ENCODE measurements at regions of chr11 and their contacts with region 1.

Region 1: DNA sequence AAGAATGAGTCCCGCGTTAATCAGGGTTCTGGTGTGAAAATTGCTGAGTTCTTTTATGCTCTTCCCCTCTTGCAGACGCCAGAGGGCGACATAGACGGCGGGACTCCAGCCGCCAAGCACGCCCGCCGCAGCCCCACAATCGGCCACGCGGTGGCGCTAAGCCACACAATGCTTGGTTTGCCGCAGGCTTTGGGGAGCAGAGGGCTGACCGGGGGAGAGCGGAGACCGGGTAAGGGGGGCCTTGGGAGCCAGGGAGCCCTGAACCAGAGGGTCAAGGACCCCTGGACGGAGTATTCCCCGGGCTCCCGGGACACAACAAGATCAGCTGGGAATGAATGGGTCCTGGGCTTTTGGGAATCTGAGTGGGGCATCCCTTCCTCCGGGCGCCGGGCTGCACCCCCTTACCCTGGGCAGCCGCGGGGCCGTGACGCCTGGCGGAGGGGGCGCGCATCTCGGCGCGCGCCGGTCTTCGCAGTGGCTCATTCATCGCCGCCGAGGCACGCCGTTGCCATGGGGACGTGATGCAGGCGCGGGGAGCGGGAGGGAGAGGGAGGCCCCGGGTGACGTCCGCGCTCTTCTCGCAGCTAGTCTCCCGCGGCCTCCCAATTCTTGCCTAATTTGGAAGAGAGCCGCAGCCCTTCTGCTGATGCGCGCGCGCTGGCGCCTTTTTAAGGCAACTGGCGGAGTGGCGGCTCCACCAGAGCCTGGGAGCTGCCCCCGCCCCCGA is 12.2 kb upstream of the NPAS4 start:
- DNase-seq: peak; percentile 36
- ATAC-seq: peak; percentile 93
- H3K4me3 ChIP-seq: no peak overlapping the region
- H3K27ac ChIP-seq: no peak overlapping the region
- H3K4me1 ChIP-seq: no peaks in the 10 kb centered on the region
- H3K27me3 ChIP-seq: peaks cover 0 to 8% of the 10 kb centered on the region in 2 experiments; a peak in 2 of 4 replicates
- CTCF ChIP-seq: peak; percentile 99 to 100 (median 99)
- EP300 ChIP-seq: no peak
- POLR2A ChIP-seq: no peak
- RAD21 ChIP-seq: peak; percentile 86

Region 2: DNA sequence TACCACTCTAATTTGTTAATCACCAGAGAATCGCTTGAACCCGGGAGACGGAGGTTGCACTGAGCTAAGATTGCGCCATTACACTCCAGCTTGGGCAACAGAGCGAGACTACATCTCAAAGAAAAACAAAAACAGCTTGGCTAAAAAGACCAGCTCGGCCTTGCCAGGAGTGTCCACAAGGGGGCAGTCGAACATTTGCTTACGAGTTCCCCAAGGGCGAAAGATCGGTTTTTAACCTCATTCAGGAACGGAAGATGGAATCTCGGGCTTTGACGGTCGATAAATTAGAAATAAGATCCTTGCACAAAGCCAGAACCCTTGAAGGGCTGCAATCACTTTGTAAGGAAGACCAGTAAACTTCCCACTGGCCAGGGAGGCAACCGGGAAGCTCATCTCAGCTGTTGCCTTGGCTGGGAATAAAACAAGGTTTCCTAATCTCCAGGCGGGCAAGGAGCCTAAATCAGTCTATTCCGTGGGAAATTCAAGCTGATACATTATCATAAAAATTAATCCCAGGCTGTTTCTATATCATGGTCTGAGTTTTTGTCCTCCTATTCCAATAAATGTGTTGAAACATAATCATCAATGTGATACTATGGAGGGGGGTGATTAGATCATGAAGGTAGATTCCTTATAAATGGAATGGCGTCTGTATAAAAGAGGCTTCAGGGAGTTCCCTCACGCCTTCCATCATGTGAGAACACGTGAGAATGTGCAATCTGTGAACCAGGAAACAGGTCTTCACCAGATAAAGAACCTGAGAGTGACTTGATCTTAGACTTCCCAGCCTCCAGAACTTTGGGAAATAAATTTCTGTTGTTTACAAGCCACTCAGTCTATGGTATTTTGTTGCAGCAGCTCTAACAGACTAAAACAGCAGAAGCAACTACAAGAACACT is 22.2 kb before region 1 on chr11:
- CTCF ChIA-PET with region 1: interaction called, 10 read pairs
- POLR2A ChIA-PET with region 1: no interaction called
- RAD21 ChIA-PET with region 1: interaction called, 4 read pairs
- SMC1A ChIA-PET with region 1: interaction called, 5 read pairs
- in situ Hi-C with region 1: no loop called
- intact Hi-C with region 1: no loop called
- DNase-seq: peak; percentile 41
- ATAC-seq: peak; percentile 93
- H3K4me3 ChIP-seq: no peak overlapping the region
- H3K27ac ChIP-seq: no peak overlapping the region
- H3K4me1 ChIP-seq: peaks cover 2% of the 10 kb centered on the region; the same call in 1 of the 2 replicates
- H3K27me3 ChIP-seq: no peaks in the 10 kb centered on the region
- CTCF ChIP-seq: peak; percentile 84 to 98 (median 94)
- EP300 ChIP-seq: no peak
- POLR2A ChIP-seq: no peak
- RAD21 ChIP-seq: peak; percentile 62

Region 3: DNA sequence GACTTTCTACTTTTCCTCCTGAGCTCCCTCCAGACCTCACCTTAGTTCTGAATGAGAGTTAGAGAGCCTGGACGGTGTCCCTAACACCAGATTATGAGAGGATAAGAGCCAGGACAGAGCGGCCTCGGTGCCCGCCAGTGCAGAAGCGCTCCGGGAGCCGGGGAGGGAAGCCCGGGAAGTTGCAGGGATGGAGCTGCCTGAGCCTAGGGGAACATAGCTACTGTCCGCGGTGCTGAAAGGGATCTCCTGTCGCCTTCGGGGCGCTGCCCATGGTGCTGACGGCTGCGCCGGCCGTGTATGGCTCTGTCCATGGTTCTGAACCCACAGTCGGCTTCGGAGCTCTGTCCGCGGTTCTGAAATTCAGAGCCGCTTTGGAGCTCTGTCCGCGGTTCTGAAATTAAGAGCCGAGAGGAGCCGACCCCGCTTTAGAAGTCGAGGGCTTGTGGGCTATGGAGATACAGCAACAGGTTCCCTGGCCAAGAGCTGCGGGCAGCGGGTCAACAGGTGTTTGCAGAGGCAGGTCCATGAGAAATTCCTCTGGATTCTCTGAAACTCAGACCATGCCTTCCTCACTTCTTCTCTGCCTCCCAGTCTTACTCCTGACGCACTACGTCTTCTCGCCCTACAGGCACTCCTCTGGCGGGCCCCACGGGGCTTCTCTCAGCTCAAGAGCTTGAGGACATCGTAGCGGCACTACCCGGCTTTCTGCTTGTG is 13.0 kb after region 1 on chr11:
- CTCF ChIA-PET with region 1: interaction called, 22 read pairs
- POLR2A ChIA-PET with region 1: no interaction called
- RAD21 ChIA-PET with region 1: interaction called, 7 read pairs
- SMC1A ChIA-PET with region 1: interaction called, 5 read pairs
- in situ Hi-C with region 1: no loop called
- intact Hi-C with region 1: no loop called
- DNase-seq: peak; percentile 37
- ATAC-seq: peak; percentile 57
- H3K4me3 ChIP-seq: no peak overlapping the region
- H3K27ac ChIP-seq: no peak overlapping the region
- H3K4me1 ChIP-seq: peaks cover 3% of the 10 kb centered on the region; the same call in 1 of the 2 replicates
- H3K27me3 ChIP-seq: peaks cover 0 to 8% of the 10 kb centered on the region in 2 experiments; a peak in 1 of 4 replicates
- CTCF ChIP-seq: no peak
- EP300 ChIP-seq: no peak
- POLR2A ChIP-seq: no peak
- RAD21 ChIP-seq: no peak

Region 4: DNA sequence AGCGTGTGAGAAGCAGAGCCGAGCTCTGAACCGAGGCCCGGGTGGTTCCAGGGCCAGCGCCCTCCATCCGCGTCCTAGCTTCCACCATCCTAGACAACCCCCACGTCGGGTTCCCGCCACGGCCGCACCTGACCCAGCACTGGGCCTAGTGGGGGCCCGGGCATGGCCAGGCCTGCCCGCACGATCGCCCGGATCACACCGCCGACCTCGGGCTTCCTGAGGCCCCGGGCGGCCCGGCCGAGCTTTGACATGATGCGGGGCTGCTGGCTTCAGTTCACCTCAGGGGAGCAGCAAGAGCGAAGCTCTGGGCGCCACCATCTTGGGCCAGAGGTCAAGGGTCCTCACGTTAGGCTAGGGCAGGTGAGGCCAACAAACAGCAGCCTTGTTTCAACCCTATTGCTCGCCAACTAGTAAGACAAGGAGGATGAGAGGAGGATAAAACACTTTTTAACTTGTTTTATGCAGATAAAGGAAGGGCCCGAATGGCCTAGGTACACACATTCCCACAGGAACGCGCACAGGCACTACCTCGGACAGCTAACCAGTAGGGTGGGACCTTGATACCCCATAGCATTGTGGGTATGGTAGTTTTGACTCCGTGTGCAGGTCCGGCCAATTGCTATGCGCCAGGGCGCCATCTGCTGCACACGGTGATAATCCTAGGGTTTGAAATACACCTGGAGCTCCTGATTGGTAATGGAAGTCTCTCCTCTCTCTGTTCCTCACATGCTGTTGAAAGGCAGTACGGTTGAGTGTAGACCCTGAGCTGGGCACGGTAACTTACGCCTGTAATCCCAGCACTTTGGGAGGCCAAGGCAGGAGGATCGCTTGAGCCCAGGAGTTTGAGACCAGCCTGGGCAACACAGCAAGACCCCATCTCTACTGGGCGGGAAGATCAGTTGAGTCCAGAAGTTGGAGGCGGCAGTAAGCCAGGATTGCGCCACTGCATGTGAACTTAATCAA is 30.1 kb after region 1 on chr11 and contains the start of gene MRPL11:
- CTCF ChIA-PET with region 1: interaction called, 31 read pairs
- POLR2A ChIA-PET with region 1: no interaction called
- RAD21 ChIA-PET with region 1: interaction called, 7 read pairs
- SMC1A ChIA-PET with region 1: interaction called, 5 read pairs
- in situ Hi-C with region 1: no loop called
- intact Hi-C with region 1: no loop called
- DNase-seq: peak; percentile 95
- ATAC-seq: peak; percentile 99
- H3K4me3 ChIP-seq: peak within 1 kb of the TSS; percentile 98
- H3K27ac ChIP-seq: peak within 1 kb of the TSS; percentile 85
- H3K4me1 ChIP-seq: no peaks in the 10 kb centered on the region
- H3K27me3 ChIP-seq: no peaks in the 10 kb centered on the region; a peak in 1 of 4 replicates
- CTCF ChIP-seq: peak; percentile 66 to 91 (median 87)
- EP300 ChIP-seq: no peak
- POLR2A ChIP-seq: peak; percentile 82
- RAD21 ChIP-seq: peak; percentile 37; the same call in 1 of the 2 replicates
- polyA plus RNA-seq, gene MRPL11: 43.5 to 80.9 TPM

Region 5: GRCh38 chr11:66684635-66685034 is 276.0 kb after region 1 on chr11:
- CTCF ChIA-PET with region 1: interaction called, 25 read pairs
- POLR2A ChIA-PET with region 1: no interaction called
- RAD21 ChIA-PET with region 1: no interaction called
- SMC1A ChIA-PET with region 1: interaction called, 7 read pairs
- in situ Hi-C with region 1: loop called (anchors 5 kb)
- intact Hi-C with region 1: no loop called
- DNase-seq: no peak
- ATAC-seq: no peak
- H3K4me3 ChIP-seq: no peak overlapping the region
- H3K27ac ChIP-seq: no peak overlapping the region
- H3K4me1 ChIP-seq: no peaks in the 10 kb centered on the region
- H3K27me3 ChIP-seq: no peaks in the 10 kb centered on the region
- CTCF ChIP-seq: no peak
- EP300 ChIP-seq: no peak
- POLR2A ChIP-seq: no peak
- RAD21 ChIP-seq: no peak